H1 (cell line): ENCODE measurements at regions of chr2 and their contacts with region 1.

Region 1: GRCh38 chr2:128062571-128062970 is 28.4 kb upstream of the UGGT1 start:
- DNase-seq: no peak
- H3K4me3 ChIP-seq: no peak overlapping the region
- H3K27ac ChIP-seq: no peak overlapping the region
- H3K4me1 ChIP-seq: no peaks in the 10 kb centered on the region
- H3K27me3 ChIP-seq: no peaks in the 10 kb centered on the region
- CTCF ChIP-seq: no peak
- EP300 ChIP-seq: no peak
- POLR2A ChIP-seq: no peak
- RAD21 ChIP-seq: no peak

Region 2: DNA sequence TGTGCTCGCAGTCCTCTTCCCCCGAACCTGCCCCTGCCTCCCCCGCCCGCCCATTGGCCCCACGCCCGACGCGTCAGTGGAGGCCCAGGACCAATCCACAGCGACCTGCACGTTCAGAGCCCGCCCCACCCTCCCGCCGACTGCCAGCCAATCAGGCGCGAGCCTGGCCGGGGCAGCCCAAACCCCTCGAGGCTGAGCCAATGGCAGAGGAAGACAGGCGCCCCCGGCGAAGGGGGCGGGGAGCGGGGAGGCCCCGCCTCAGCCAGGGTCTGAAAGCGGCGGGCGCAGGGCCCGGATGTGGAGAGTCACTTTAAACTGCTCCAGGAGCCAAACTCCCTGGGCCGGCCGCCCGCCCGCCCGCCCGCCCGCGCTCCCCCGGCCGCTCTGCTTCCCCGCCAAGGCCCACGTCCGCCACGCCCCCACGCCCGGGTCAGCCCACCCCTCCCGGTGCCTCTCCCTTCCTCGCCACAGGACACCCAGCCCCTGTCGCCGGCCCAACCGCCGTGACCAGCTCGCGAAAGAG is 35.2 kb before region 1 on chr2:
- CTCF ChIA-PET with region 1: no interaction called
- POLR2A ChIA-PET with region 1: no interaction called
- DNase-seq: peak; percentile 95 to 96
- H3K4me3 ChIP-seq: peak overlapping the region; percentile 68 to 99 (median 86)
- H3K27ac ChIP-seq: peak overlapping the region; percentile 84; the same call in 1 of the 2 replicates
- H3K4me1 ChIP-seq: peaks cover 0 to 8% (median 4%) of the 10 kb centered on the region in 4 experiments; a peak in 5 of 7 replicates
- H3K27me3 ChIP-seq: peaks cover 0 to 6% (median 2%) of the 10 kb centered on the region in 4 experiments; a peak in 2 of 7 replicates
- CTCF ChIP-seq: no peak
- EP300 ChIP-seq: no peak
- POLR2A ChIP-seq: no peak
- RAD21 ChIP-seq: no peak

Region 3: DNA sequence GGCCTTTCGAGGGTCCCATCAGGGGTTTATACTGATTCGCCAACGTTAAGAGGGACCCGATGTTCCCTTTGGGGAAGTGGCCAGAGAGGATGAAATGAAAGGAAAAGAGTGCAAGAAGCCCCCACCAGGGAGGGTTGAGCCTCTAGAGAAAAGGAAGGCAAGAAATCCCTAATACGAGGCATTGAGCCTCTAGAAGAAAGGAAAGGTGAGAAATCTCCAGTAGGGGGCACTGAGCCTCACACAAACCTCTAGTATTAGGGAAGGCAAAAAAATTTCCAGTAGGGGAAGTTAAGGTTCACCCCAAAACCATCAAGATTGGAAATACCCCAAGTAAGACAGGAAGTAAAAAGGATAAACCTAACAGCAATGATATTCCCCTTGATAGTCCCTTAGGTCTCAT is 24.9 kb before region 1 on chr2:
- CTCF ChIA-PET with region 1: interaction called, 25 read pairs
- POLR2A ChIA-PET with region 1: no interaction called
- DNase-seq: peak in 1 of 2 experiments; percentile 56
- H3K4me3 ChIP-seq: no peak overlapping the region
- H3K27ac ChIP-seq: no peak overlapping the region
- H3K4me1 ChIP-seq: no peaks in the 10 kb centered on the region; a peak in 1 of 7 replicates
- H3K27me3 ChIP-seq: no peaks in the 10 kb centered on the region
- CTCF ChIP-seq: peak in 2 of 3 experiments; percentile 68 to 73; a peak in 3 of 4 replicates
- EP300 ChIP-seq: no peak
- POLR2A ChIP-seq: no peak
- RAD21 ChIP-seq: peak; percentile 54 to 62

Region 4: DNA sequence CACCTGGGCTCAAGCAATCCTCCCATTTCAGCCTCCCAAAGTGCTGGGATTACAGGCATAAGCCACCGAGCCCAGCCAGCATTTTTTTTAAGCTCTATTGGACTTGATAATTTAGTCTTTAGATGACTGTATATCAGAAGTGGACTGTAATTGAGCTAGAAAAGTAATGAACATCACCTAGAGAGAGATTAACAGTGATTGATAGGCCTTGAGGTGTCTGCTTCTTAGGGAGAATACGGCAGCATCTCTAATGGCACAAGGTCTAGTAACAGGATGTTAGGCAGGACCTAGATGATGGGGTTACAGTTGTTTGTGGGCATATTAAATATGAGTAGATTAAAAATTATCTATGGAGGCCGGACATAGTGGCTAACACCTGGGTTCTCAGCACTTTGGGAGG is 10.7 kb after region 1 on chr2:
- CTCF ChIA-PET with region 1: interaction called, 19 read pairs
- POLR2A ChIA-PET with region 1: no interaction called
- DNase-seq: no peak
- H3K4me3 ChIP-seq: no peak overlapping the region
- H3K27ac ChIP-seq: no peak overlapping the region
- H3K4me1 ChIP-seq: no peaks in the 10 kb centered on the region
- H3K27me3 ChIP-seq: no peaks in the 10 kb centered on the region
- CTCF ChIP-seq: no peak
- EP300 ChIP-seq: no peak
- POLR2A ChIP-seq: no peak
- RAD21 ChIP-seq: no peak

Region 5: DNA sequence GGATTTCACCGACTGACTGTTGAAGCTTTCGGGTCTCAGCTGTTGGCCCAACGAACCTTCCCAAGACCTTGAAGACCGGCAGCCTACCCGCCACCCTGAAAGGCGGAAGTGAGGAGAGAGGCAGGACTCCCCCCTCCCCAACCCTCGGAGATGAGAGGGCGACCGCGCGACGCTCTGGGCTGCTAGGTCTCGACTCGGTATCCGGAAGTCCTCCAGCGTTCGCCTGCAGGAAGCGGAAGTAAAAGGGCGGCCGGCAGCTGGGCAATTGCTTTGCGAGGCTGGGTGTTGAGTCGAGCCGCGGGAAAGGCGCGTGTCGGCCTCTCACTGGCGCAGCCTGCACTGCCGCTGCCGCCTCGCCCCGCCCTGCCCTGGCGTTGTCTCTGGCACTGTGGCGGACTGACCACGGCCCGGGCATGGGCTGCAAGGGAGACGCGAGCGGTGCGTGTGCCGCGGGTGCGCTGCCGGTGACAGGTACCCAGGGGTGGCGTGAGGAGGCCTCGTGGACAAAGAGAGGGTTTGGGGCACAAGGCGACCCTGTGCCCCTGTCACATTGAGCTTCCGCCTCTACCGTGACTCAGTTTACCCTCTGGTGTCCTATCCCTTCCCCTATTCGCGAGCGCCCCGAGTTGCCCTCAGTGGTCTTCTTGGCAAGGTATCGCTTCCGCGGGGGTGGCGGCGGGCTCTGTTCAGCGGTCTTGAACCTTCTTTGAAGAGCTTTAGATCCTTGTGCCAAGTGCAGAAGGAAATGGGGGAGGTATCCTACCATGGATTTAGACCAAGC is 28.6 kb after region 1 on chr2 and contains the start of gene UGGT1:
- CTCF ChIA-PET with region 1: interaction called, 38 read pairs
- POLR2A ChIA-PET with region 1: interaction called, 3 read pairs
- DNase-seq: peak; percentile 89 to 94
- H3K4me3 ChIP-seq: peak within 1 kb of the TSS; percentile 86 to 90 (median 88)
- H3K27ac ChIP-seq: peak within 1 kb of the TSS; percentile 37; the same call in 1 of the 2 replicates
- H3K4me1 ChIP-seq: no peaks in the 10 kb centered on the region
- H3K27me3 ChIP-seq: no peaks in the 10 kb centered on the region
- CTCF ChIP-seq: no peak
- EP300 ChIP-seq: no peak
- POLR2A ChIP-seq: peak; percentile 92 to 93
- RAD21 ChIP-seq: no peak
- total RNA-seq, gene UGGT1: 57.3 and 61.2 TPM in 2 replicates

Region 6: DNA sequence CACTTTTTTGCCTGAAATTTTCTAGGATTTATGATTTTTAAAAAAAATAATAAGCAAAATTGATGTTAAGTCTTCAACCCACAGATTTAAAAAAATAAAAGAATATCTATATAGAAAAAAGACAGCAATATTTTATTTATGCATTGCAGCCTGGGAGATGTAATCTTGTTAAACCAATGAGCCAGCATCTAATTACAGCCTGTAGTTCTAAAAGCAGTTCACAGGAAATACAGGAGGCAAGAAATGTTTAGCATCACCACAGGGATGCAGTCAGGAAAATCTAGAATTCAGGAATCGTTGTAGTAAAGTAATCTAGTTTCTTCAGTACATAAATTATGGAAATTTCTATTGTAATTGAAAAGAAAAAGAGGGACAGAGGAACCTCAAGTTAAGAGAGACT is 45.6 kb after region 1 on chr2:
- CTCF ChIA-PET with region 1: interaction called, 26 read pairs
- POLR2A ChIA-PET with region 1: no interaction called
- DNase-seq: no peak
- H3K4me3 ChIP-seq: no peak overlapping the region
- H3K27ac ChIP-seq: no peak overlapping the region
- H3K4me1 ChIP-seq: no peaks in the 10 kb centered on the region
- H3K27me3 ChIP-seq: no peaks in the 10 kb centered on the region
- CTCF ChIP-seq: no peak
- EP300 ChIP-seq: no peak
- POLR2A ChIP-seq: no peak
- RAD21 ChIP-seq: no peak